A673 (cell line): ENCODE measurements at regions of chr11 and their contacts with region 1.

Region 1: DNA sequence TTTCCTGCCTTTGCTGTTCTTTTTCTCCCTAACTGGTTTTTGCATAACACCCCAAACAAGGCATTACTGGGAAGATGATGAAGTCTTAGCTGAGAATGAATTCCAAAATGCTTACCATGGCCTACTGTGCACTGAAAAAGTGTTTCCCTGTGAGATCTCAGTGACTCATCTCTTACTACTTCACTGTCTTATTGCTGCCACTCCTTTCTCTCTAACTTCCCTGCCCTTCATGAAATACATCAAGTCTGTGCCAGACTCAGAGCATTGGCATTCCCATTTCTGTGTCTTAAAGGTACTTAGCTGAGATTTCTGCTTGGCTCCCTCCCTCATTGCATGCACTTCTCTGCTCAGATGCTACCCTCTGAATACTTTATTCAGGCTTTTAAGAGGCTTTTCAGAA is 49.1 kb upstream of the MUC15 start:
- DNase-seq: peak; percentile 86
- H3K4me3 ChIP-seq: no peak overlapping the region
- H3K27ac ChIP-seq: no peak overlapping the region
- H3K4me1 ChIP-seq: peaks cover 57% of the 10 kb centered on the region
- H3K27me3 ChIP-seq: no peaks in the 10 kb centered on the region
- CTCF ChIP-seq: no peak

Region 2: DNA sequence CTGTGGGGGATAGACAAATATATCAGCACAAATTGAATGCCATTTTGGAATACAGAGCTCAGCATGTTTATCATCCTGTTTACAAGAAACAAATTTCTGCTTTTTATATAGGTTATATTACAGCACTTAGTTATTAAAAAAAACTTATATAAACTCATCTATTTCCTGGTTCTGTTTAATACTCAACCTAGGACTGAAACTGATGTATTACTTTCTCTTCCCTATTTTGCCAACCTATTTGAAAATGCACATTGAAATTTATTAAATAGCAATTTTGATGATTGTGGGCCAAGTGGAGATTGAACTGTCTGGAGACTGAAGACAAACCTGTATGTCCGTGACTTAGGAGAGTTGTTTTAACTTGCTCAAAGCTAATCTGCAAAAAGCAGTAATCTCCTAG is 577.5 kb before region 1 on chr11:
- CTCF ChIA-PET with region 1: no interaction called
- POLR2A ChIA-PET with region 1: interaction called, 10 read pairs
- intact Hi-C with region 1: no loop called
- DNase-seq: no peak
- H3K4me3 ChIP-seq: no peak overlapping the region
- H3K27ac ChIP-seq: no peak overlapping the region
- H3K4me1 ChIP-seq: no peaks in the 10 kb centered on the region
- H3K27me3 ChIP-seq: no peaks in the 10 kb centered on the region
- CTCF ChIP-seq: no peak

Region 3: DNA sequence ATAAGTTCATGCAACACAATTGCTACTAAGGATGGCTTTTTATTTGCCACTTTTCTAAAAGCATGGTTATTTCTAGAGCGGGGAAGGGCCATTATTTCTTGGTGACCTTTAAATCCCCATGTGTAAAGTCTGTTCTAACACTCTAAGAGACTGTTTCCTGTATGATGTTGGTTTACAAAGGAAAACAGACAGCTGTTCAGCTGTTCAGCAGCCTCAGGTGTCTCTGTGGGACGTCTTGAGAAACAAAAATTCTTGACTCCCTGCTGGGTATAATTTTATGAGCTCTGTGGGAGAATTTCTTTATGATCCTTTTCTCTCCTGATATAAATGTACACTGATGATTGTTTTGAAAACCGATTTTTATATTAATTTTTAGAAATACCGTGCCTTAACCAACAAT is 63.0 kb before region 1 on chr11:
- CTCF ChIA-PET with region 1: no interaction called
- POLR2A ChIA-PET with region 1: no interaction called
- intact Hi-C with region 1: loop called (anchors 1 kb)
- DNase-seq: peak; percentile 90
- H3K4me3 ChIP-seq: no peak overlapping the region
- H3K27ac ChIP-seq: no peak overlapping the region
- H3K4me1 ChIP-seq: peaks cover 15% of the 10 kb centered on the region
- H3K27me3 ChIP-seq: peaks cover 88% of the 10 kb centered on the region
- CTCF ChIP-seq: no peak

Region 4: DNA sequence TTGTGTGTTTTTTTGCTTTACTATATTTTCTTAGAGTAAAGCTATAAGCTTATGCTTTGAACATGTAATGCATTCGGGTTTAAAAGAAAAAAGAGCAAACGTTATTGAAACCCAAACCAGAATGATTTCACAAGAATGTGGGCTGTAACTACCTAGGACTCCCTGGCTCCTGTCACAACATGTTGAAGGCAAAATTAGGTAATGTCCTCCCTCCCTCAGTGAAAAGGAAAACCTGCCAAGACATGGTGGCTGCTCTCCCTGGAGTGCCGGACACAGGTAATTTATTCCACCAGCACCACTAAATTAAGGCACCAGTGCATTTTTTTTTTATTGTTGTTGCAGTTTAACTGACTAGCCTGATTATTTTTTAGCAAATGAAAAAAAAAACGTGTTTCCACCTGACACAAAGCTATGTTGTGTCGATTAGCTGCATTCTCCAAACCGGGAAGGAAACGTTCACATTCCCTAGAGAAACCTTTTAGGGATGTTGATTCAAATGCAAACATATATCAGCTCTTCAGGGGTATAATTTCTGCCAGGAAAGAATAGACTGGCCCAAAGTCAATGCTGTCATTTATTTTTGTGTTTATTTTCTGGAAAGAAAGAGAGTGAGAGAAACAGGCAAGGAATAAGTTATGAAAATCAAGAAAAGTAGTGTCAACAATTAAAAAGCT is 607.2 kb after region 1 on chr11:
- CTCF ChIA-PET with region 1: no interaction called
- POLR2A ChIA-PET with region 1: interaction called, 11 read pairs
- intact Hi-C with region 1: no loop called
- DNase-seq: no peak
- H3K4me3 ChIP-seq: no peak overlapping the region
- H3K27ac ChIP-seq: no peak overlapping the region
- H3K4me1 ChIP-seq: peaks cover 15% of the 10 kb centered on the region
- H3K27me3 ChIP-seq: no peaks in the 10 kb centered on the region
- CTCF ChIP-seq: no peak